HepG2 (cell line): ENCODE measurements at regions of chr19 and their contacts with region 1.

Region 1: GRCh38 chr19:47190167-47190727 is 40.8 kb downstream of the BBC3 start:
- DNase-seq: peak; percentile 96
- ATAC-seq: peak; percentile 67
- H3K4me3 ChIP-seq: peak overlapping the region; percentile 36 to 45 (median 43); a peak in 5 of 6 replicates
- H3K27ac ChIP-seq: peak overlapping the region; percentile 83
- H3K4me1 ChIP-seq: peaks cover 65% of the 10 kb centered on the region
- H3K27me3 ChIP-seq: no peaks in the 10 kb centered on the region
- CTCF ChIP-seq: no peak
- EP300 ChIP-seq: peak; percentile 92 to 97; a peak in 3 of 4 replicates
- POLR2A ChIP-seq: peak; percentile 44; a peak in 3 of 4 replicates
- RAD21 ChIP-seq: no peak; the same call in 1 of the 2 replicates

Region 2: GRCh38 chr19:47013041-47013517 is 177.2 kb before region 1 on chr19:
- CTCF ChIA-PET with region 1: no interaction called
- POLR2A ChIA-PET with region 1: no interaction called
- in situ Hi-C with region 1: no loop called
- intact Hi-C with region 1: no loop called
- DNase-seq: peak; percentile 56
- ATAC-seq: peak; percentile 92
- H3K4me3 ChIP-seq: peak overlapping the region in 1 of 3 experiments; percentile 56; a peak in 2 of 6 replicates
- H3K27ac ChIP-seq: no peak overlapping the region
- H3K4me1 ChIP-seq: peaks cover 21% of the 10 kb centered on the region
- H3K27me3 ChIP-seq: no peaks in the 10 kb centered on the region; a peak in 1 of 5 replicates
- CTCF ChIP-seq: peak; percentile 96
- EP300 ChIP-seq: no peak
- POLR2A ChIP-seq: no peak
- RAD21 ChIP-seq: peak; percentile 95

Region 3: DNA sequence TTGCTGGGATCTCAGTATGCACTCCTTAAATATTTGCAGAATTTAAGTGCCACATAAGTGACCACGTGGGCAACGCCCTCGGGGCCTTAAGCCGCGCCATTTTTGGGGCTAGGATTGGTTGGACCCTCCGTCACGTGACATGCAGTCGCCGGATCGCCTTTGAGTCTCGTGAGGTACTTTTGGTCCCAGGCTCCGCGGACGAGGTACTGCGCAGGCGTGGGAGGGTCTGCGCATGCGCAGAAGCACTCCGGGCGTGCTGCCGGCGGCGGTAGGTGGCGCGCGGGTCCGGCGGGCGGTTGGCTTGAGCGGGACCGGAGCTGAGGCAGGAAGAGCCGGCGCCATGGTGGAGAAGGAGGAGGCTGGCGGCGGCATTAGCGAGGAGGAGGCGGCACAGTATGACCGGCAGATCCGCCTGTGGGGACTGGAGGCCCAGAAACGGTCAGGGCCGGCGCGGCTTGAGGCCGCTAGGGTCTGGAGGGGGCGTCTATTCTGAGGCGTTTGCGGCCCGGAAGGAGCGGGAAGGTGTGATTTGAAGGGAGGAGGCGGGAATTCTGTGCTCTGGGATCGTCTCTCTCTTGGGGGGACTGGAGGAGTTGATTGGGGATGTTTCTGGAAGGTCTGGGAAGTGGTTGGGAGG is 59.5 kb before region 1 on chr19 and contains the start of gene SAE1:
- CTCF ChIA-PET with region 1: no interaction called
- POLR2A ChIA-PET with region 1: interaction called, 21 read pairs
- in situ Hi-C with region 1: no loop called
- intact Hi-C with region 1: no loop called
- DNase-seq: peak; percentile 97
- ATAC-seq: peak; percentile 90
- H3K4me3 ChIP-seq: peak within 1 kb of the TSS; percentile 78 to 87 (median 87)
- H3K27ac ChIP-seq: peak within 1 kb of the TSS; percentile 81
- H3K4me1 ChIP-seq: peaks cover 44% of the 10 kb centered on the region
- H3K27me3 ChIP-seq: no peaks in the 10 kb centered on the region; a peak in 1 of 5 replicates
- CTCF ChIP-seq: peak; percentile 90
- EP300 ChIP-seq: no peak
- POLR2A ChIP-seq: peak; percentile 45 to 81; a peak in 3 of 4 replicates
- RAD21 ChIP-seq: no peak; the same call in 1 of the 2 replicates
- total RNA-seq, gene SAE1: 197 and 250 TPM in 2 replicates

Region 4: DNA sequence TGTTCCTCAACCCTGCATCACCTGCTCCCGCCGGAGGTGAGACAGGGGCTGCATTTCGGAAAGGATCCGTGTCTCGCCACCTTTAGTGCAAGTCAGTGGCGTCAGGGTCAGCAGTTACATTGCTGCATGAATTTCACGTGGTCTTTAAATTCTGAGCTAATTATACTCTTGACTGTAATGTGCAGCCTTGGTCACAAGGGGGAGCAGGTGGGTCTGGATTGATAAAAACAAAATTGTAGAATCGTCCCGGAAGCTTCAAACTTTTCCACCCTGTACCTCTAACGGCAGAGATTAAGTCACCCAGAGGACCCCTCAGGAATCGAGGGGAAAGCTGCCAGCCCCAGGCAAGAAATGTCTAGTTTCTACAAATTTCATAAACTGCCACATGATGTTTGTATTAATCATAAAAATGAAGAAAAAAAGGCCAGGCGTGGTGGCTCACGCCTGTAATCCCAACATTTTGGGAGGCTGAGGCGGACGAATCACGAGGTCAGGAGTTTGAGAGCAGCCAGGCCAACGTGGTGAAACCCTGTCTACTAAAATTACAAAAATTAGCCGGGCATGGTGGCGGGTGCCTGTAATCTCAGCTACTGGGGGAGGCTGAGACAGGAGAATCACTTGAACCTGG is 20.6 kb after region 1 on chr19:
- CTCF ChIA-PET with region 1: no interaction called
- POLR2A ChIA-PET with region 1: interaction called, 19 read pairs
- in situ Hi-C with region 1: no loop called
- intact Hi-C with region 1: no loop called
- DNase-seq: peak; percentile 71
- ATAC-seq: peak; percentile 52
- H3K4me3 ChIP-seq: no peak overlapping the region
- H3K27ac ChIP-seq: peak overlapping the region; percentile 55
- H3K4me1 ChIP-seq: peaks cover 11% of the 10 kb centered on the region
- H3K27me3 ChIP-seq: no peaks in the 10 kb centered on the region
- CTCF ChIP-seq: peak; percentile 80
- EP300 ChIP-seq: no peak
- POLR2A ChIP-seq: 0 out of 4 replicates have a peak, but pooled peaks of 1 of the 2 experiments have one; percentile 16
- RAD21 ChIP-seq: peak; percentile 68

Region 5: DNA sequence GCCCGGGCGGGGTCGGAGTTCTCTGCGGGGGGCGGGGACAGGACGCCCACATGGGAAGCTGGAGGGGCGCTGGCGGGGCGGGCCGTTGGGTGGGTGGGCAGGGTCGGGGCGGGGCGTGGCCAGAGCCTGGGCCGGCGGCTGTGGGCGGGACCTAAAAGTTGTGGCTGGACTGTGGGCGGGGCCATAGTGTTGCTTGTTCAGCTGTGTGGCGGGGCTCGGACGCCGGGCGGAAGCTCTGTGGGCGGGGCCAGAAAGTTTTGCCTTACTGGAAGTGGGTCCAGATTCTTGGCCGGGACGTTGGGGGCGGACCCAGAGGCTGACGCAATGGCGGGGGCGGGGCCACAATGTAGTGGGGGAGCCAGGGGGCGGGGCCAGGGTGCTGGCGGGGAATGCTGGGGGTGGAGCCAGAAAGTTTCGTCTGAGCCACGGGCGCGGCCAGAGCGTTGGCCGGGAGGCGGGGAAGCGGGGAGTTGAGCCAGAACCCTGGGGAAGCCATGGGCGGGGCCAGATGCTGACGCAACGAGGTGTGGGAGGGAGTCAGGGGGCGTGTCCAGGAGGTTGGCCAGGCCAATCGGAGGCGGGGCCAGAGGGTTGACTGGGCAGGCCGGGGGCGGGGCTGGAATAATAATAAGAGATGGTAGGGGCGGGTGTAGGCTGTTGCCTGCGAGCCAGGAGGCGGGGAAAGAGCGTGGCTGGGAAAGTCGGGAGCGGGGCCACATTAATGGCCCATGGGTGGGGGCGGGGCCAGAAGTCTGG is 66.6 kb after region 1 on chr19:
- CTCF ChIA-PET with region 1: no interaction called
- POLR2A ChIA-PET with region 1: interaction called, 11 read pairs
- in situ Hi-C with region 1: no loop called
- intact Hi-C with region 1: no loop called
- DNase-seq: peak; percentile 95
- ATAC-seq: peak; percentile 78
- H3K4me3 ChIP-seq: peak overlapping the region; percentile 72 to 88 (median 88); a peak in 4 of 6 replicates
- H3K27ac ChIP-seq: peak overlapping the region; percentile 86
- H3K4me1 ChIP-seq: peaks cover 43% of the 10 kb centered on the region
- H3K27me3 ChIP-seq: no peaks in the 10 kb centered on the region
- CTCF ChIP-seq: no peak
- EP300 ChIP-seq: no peak
- POLR2A ChIP-seq: no peak
- RAD21 ChIP-seq: no peak